ENCODE measurements at regions of chr1 and their contacts with region 1.

Region 1: GRCh38 chr1:151653397-151653796 is 41.5 kb downstream of the SNX27 start:
- DNase-seq: no peak
- H3K4me3 ChIP-seq: no peak overlapping the region
- H3K27ac ChIP-seq: no peak overlapping the region
- H3K4me1 ChIP-seq: no peaks in the 10 kb centered on the region
- H3K27me3 ChIP-seq: no peaks in the 10 kb centered on the region
- CTCF ChIP-seq: no peak

Region 2: GRCh38 chr1:151502923-151503780 is 150.2 kb before region 1 on chr1:
- CTCF ChIA-PET with region 1: no interaction called
- POLR2A ChIA-PET with region 1: no interaction called
- intact Hi-C with region 1: no loop called
- DNase-seq: peak; percentile 36 to 46
- H3K4me3 ChIP-seq: no peak overlapping the region
- H3K27ac ChIP-seq: no peak overlapping the region
- H3K4me1 ChIP-seq: peaks cover 13% of the 10 kb centered on the region; the same call in 1 of the 2 replicates
- H3K27me3 ChIP-seq: no peaks in the 10 kb centered on the region
- CTCF ChIP-seq: no peak

Region 3: DNA sequence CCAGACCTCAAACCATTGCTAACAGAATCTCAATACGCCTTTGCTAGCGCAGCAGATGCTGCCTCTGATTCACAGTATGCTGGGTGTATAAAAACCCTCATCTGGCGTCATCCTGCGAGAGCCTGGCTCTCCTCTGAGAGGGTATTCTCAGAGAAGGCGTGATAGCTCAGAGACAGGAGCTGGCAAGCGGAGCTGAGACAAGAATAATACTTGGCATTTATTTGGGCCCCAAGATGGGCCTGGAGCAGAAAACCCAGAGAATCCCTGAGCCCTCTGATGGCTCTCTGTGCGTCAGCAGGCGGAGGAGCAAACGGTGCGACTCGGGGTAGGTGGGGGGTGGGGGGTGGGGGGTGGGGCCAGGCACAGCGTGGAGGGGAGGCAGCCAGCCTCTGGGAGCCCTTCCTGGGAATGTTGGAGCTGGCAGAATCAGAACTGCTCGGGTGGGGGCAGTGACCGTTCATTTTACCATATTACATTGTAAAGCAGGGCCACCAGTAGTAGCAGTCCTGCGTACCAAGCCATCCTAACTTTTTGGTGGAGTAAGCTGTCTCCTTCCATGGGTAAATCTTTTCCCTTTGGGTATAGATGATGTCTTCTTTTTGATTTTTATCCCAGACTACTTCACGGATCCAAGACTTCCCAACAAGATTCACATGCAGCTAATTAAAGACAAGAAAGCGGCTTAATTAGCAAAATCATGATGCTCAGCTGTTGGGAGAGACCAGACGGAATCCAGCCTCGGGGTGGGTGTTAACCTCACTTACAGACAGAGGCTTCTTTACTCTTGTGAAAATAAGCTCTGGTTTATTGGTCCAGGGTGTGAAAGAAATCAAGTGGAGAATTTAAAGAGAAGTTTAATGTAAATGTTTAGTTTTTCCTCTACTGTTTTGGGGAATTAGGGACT is 75.0 kb after region 1 on chr1:
- CTCF ChIA-PET with region 1: no interaction called
- POLR2A ChIA-PET with region 1: interaction called, 12 read pairs
- intact Hi-C with region 1: no loop called
- DNase-seq: no peak
- H3K4me3 ChIP-seq: no peak overlapping the region
- H3K27ac ChIP-seq: no peak overlapping the region
- H3K4me1 ChIP-seq: peaks cover 11% of the 10 kb centered on the region; the same call in 1 of the 2 replicates
- H3K27me3 ChIP-seq: no peaks in the 10 kb centered on the region
- CTCF ChIP-seq: no peak